A549 (cell line): ENCODE measurements at regions of chr11 and their contacts with region 1.

Region 1: DNA sequence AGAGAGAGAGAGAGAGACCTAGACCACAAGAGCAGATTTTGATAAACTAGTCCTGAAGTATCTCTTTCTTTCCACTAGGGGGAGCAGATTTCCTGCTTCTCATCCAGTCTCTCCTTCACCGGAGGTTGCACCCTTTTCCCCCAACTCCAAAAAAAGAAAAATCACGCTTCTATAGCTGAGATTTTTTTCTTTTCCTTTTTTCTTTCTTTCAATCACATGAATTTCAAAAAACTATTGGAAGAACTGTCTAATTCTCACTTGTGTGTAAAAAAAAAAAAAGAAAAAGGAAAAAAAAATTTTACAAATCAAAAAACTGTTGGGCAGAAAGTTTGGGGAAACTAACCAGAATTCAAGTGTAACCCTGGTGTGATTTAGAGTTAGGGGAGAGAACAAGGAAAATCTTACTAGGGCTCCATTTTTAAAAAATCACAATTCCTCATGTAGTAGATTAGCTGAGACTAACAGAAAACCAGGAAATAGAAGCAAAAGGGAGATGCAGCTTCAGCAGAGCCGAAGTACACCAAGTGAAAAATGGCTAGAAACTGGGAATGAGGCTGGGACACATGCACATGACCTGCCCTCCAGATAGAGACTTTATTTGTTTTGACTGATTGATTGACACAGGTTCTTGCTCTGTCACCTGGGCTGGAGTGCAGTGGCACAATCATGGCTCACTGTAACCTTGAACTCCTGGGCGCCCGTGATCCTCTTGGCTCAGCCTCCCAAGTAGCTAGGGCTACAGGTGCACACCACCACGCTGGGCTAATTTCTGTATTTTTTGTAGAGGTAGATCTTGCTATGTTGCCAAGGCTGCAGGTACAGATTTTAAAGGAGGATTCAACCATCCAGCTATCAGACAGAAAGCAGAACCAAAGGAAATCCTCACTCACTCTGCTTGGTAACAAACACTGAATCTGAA is 27.1 kb downstream of the SDHD start:
- DNase-seq: peak; percentile 31 to 64
- ATAC-seq: peak; percentile 66 to 80; a peak in 4 of 6 replicates
- H3K4me3 ChIP-seq: no peak overlapping the region
- H3K27ac ChIP-seq: peak overlapping the region; percentile 52 to 60; a peak in 3 of 6 replicates
- H3K4me1 ChIP-seq: 0 out of 3 replicates have a peak, but pooled peaks cover 3% of the 10 kb centered on the region
- CTCF ChIP-seq: peak; percentile 63
- EP300 ChIP-seq: no peak
- POLR2A ChIP-seq: no peak
- RAD21 ChIP-seq: peak; percentile 69 to 78

Region 2: GRCh38 chr11:111663820-111664219 is 450.0 kb before region 1 on chr11:
- CTCF ChIA-PET with region 1: no interaction called
- POLR2A ChIA-PET with region 1: no interaction called
- DNase-seq: no peak
- ATAC-seq: no peak
- H3K4me3 ChIP-seq: no peak overlapping the region
- H3K27ac ChIP-seq: no peak overlapping the region
- H3K4me1 ChIP-seq: no peaks in the 10 kb centered on the region
- CTCF ChIP-seq: no peak
- EP300 ChIP-seq: no peak
- POLR2A ChIP-seq: no peak
- RAD21 ChIP-seq: no peak

Region 3: DNA sequence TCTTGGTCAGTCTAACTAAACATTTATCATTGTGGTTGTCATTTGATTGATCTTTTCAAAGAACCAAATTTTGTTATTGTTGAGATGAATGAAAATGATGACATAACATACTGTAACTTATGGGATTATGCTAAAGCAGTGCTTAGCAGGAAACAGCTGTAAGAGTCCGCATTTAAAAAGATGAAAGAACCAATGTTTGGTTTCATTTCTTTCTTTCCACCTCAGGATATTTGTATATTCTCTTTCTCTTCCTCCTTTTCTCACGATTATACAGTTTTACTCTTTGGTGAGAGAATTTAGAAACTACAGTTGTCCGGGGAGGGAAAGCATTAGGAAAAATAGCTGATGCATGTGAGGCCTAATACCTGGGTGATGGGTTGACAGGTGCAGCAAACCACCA is 63.1 kb before region 1 on chr11:
- CTCF ChIA-PET with region 1: no interaction called
- POLR2A ChIA-PET with region 1: no interaction called
- DNase-seq: no peak
- ATAC-seq: no peak
- H3K4me3 ChIP-seq: no peak overlapping the region
- H3K27ac ChIP-seq: no peak overlapping the region
- H3K4me1 ChIP-seq: no peaks in the 10 kb centered on the region
- CTCF ChIP-seq: no peak
- EP300 ChIP-seq: no peak
- POLR2A ChIP-seq: no peak
- RAD21 ChIP-seq: no peak

Region 4: DNA sequence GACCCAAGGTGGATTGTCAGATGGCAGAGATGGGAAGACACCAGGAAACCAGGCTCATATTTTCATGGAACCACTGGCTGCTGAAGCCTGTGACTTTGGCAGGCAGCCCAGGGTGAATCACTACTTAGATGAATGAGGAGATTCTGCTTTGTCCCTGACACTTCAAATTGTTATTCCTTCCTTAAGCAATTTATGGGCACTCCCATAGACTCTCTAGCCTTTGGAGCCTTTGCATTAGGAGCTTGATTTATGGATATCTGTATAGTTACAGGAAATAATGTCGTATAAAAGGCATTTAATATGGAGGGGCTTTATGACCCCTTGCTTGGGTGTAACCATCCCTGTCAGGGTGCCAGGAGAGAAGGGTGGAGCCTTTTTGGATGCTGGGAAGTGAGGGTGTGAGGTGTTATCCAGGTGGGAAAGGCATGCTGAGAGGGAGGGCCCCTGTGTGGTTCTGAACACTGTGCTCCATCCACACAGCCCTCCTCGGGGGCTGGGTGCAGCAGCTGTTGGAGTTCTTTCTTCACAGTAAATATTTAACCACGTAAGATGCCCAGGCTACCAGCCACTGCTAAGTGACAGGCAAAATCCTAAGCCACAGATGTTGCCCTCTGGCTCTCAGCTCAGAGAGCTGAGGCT is 14.8 kb after region 1 on chr11:
- CTCF ChIA-PET with region 1: interaction called, 18 read pairs
- POLR2A ChIA-PET with region 1: no interaction called
- DNase-seq: peak; percentile 66 to 76
- ATAC-seq: peak; percentile 91 to 95
- H3K4me3 ChIP-seq: no peak overlapping the region
- H3K27ac ChIP-seq: peak overlapping the region; percentile 62 to 69
- H3K4me1 ChIP-seq: peaks cover 20% of the 10 kb centered on the region
- CTCF ChIP-seq: no peak
- EP300 ChIP-seq: no peak
- POLR2A ChIP-seq: no peak
- RAD21 ChIP-seq: no peak

Region 5: GRCh38 chr11:112174789-112175598 is 61.2 kb after region 1 on chr11 and contains the start of gene BCO2:
- CTCF ChIA-PET with region 1: interaction called, 50 read pairs
- POLR2A ChIA-PET with region 1: no interaction called
- DNase-seq: peak; percentile 51 to 71
- ATAC-seq: peak; percentile 97 to 99
- H3K4me3 ChIP-seq: peak within 1 kb of the TSS; percentile 46
- H3K27ac ChIP-seq: peak within 1 kb of the TSS; percentile 5 to 64; a peak in 3 of 6 replicates
- H3K4me1 ChIP-seq: peaks cover 24% of the 10 kb centered on the region
- CTCF ChIP-seq: peak; percentile 93
- EP300 ChIP-seq: no peak
- POLR2A ChIP-seq: no peak
- RAD21 ChIP-seq: peak; percentile 80
- polyA plus RNA-seq, gene BCO2: 1.9 and 2.1 TPM in 2 replicates